HCT116 (cell line): ENCODE measurements at regions of chr3 and their contacts with region 1.

Region 1: GRCh38 chr3:184469423-184469822 is 89.6 kb downstream of the CHRD start:
- DNase-seq: peak; percentile 45
- ATAC-seq: peak; percentile 92
- H3K4me3 ChIP-seq: no peak overlapping the region
- H3K27ac ChIP-seq: no peak overlapping the region
- H3K4me1 ChIP-seq: peaks cover 2 to 12% of the 10 kb centered on the region in 2 experiments; a peak in 1 of 4 replicates
- H3K27me3 ChIP-seq: no peaks in the 10 kb centered on the region
- CTCF ChIP-seq: peak; percentile 89 to 93 (median 93)
- POLR2A ChIP-seq: no peak
- RAD21 ChIP-seq: peak; percentile 93

Region 2: GRCh38 chr3:184513276-184514170 is 44.1 kb after region 1 on chr3:
- CTCF ChIA-PET with region 1: interaction called, 9 read pairs
- POLR2A ChIA-PET with region 1: no interaction called
- RAD21 ChIA-PET with region 1: interaction called in 1 of 2 experiments, 3 read pairs
- intact Hi-C with region 1: loop called (anchors 1 kb)
- DNase-seq: peak; percentile 69
- ATAC-seq: peak; percentile 99
- H3K4me3 ChIP-seq: peak overlapping the region; percentile 32 to 49
- H3K27ac ChIP-seq: no peak overlapping the region
- H3K4me1 ChIP-seq: peaks cover 0 to 12% of the 10 kb centered on the region in 2 experiments; a peak in 1 of 4 replicates
- H3K27me3 ChIP-seq: no peaks in the 10 kb centered on the region
- CTCF ChIP-seq: peak; percentile 67 to 79 (median 79)
- POLR2A ChIP-seq: no peak
- RAD21 ChIP-seq: peak; percentile 80